ENCODE measurements at regions of chr20 and their contacts with region 1.

Region 1: GRCh38 chr20:20083807-20084206 is 31.5 kb downstream of the CFAP61 start:
- DNase-seq: peak; percentile 64
- H3K4me3 ChIP-seq: no peak overlapping the region
- H3K27ac ChIP-seq: no peak overlapping the region
- H3K4me1 ChIP-seq: peaks cover 7% of the 10 kb centered on the region
- H3K27me3 ChIP-seq: peaks cover 16% of the 10 kb centered on the region
- CTCF ChIP-seq: peak; percentile 70

Region 2: GRCh38 chr20:19885939-19886660 is 197.7 kb before region 1 on chr20:
- CTCF ChIA-PET with region 1: no interaction called
- POLR2A ChIA-PET with region 1: no interaction called
- intact Hi-C with region 1: no loop called
- DNase-seq: peak; percentile 16
- H3K4me3 ChIP-seq: no peak overlapping the region
- H3K27ac ChIP-seq: no peak overlapping the region
- H3K4me1 ChIP-seq: peaks cover 12% of the 10 kb centered on the region
- H3K27me3 ChIP-seq: no peaks in the 10 kb centered on the region
- CTCF ChIP-seq: no peak

Region 3: DNA sequence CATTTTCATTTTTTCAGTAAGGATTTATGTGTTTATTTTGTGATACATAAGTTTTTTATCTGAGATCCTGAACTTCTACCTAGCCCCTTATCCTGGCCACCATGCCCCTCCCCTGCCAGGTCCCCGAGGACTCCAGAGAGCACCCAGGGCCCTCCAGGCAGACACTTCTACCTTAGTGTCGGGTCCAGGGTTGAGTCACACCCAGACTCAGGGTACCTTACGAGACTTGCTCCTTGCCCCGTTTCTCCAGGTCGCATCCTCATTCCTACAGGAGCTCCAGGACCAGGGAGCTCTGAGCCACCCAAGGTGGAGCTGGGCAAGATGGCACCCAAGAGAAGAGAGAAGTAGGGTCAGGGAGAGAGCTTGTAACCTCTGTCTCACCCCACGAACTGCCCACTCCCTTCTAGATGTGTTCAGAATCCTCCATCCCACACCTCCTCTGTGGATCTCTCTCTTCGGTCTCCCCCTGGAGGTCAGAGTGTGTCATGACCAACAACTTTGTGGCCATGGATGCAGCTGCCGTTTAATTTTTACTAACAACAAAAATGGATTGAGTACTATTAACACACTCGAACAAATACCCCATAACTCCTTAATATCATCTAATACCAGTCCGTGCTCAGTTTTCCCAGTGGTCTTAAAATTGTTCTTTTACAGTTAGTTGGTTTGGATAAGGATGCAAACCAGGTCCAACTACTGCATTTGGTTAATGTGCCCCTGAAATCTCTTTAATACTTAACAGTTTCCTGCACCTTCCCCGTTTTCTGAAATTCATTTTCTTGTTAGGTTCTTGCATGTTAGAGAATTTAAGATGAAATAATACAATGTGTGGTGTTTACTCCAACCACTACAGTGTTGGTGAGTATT is 153.5 kb after region 1 on chr20:
- CTCF ChIA-PET with region 1: no interaction called
- POLR2A ChIA-PET with region 1: no interaction called
- intact Hi-C with region 1: loop called (anchors 2 kb)
- DNase-seq: peak; percentile 57
- H3K4me3 ChIP-seq: no peak overlapping the region
- H3K27ac ChIP-seq: no peak overlapping the region
- H3K4me1 ChIP-seq: no peaks in the 10 kb centered on the region
- H3K27me3 ChIP-seq: no peaks in the 10 kb centered on the region
- CTCF ChIP-seq: peak; percentile 83

Region 4: GRCh38 chr20:20360464-20360863 is 276.7 kb after region 1 on chr20:
- CTCF ChIA-PET with region 1: no interaction called
- POLR2A ChIA-PET with region 1: no interaction called
- intact Hi-C with region 1: loop called (anchors 2 kb)
- DNase-seq: peak; percentile 80
- H3K4me3 ChIP-seq: no peak overlapping the region
- H3K27ac ChIP-seq: no peak overlapping the region
- H3K4me1 ChIP-seq: no peaks in the 10 kb centered on the region
- H3K27me3 ChIP-seq: peaks cover 50% of the 10 kb centered on the region
- CTCF ChIP-seq: peak; percentile 78

Region 5: GRCh38 chr20:20568604-20569205 is 484.9 kb after region 1 on chr20:
- CTCF ChIA-PET with region 1: no interaction called
- POLR2A ChIA-PET with region 1: no interaction called
- intact Hi-C with region 1: loop called (anchors 2 kb)
- DNase-seq: peak; percentile 62
- H3K4me3 ChIP-seq: no peak overlapping the region
- H3K27ac ChIP-seq: no peak overlapping the region
- H3K4me1 ChIP-seq: no peaks in the 10 kb centered on the region
- H3K27me3 ChIP-seq: no peaks in the 10 kb centered on the region
- CTCF ChIP-seq: peak; percentile 82

Region 6: DNA sequence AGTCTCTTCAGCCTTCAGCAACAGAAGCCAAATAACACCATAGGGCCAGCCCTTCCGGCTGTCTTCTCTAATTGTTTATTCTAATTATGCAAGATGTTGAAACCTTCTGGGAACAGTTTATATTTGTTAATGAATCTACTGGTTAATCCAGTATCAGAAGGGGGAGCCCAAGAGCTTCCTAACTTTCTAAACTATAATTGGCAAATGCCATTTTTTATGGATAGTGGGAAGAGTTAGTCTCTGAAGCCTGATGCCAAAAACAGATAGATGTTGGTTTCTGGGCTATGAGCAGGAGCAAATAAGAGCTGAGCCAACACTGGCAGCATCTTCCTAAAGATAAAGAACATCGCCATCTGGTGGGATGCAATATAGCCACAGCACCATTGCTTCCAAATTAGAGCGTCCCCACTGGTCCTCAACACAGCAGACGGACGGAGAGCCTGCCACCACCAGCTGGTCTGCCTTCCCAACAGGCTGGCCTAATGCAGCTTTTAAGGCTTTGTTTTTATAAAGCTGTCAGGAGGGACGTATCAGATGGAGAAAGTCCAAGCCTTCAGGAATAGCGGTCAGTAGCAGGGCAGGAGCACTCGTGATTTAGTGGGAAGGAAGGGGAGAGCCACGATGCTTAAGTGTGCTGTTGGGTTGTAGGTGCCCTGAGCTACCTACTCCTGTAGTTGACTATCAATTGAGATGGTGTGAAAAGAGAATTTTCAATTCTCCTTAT is 509.8 kb after region 1 on chr20:
- CTCF ChIA-PET with region 1: no interaction called
- POLR2A ChIA-PET with region 1: no interaction called
- intact Hi-C with region 1: loop called (anchors 5 kb)
- DNase-seq: peak; percentile 78
- H3K4me3 ChIP-seq: no peak overlapping the region
- H3K27ac ChIP-seq: no peak overlapping the region
- H3K4me1 ChIP-seq: no peaks in the 10 kb centered on the region
- H3K27me3 ChIP-seq: no peaks in the 10 kb centered on the region
- CTCF ChIP-seq: peak; percentile 75